Uterus (tissue), 4 donors: ENCODE measurements at regions of chr1 and their contacts with region 1.

Region 1: GRCh38 chr1:109282952-109283747 is at the start of gene PSRC1:
- DNase-seq: peak; percentile 96 to 97
- H3K4me3 ChIP-seq: peak within 1 kb of the TSS; percentile 36 to 53
- H3K27ac ChIP-seq: peak within 1 kb of the TSS; percentile 66 to 86
- H3K4me1 ChIP-seq: peaks cover 4 to 7% of the 10 kb centered on the region in 2 donors
- H3K27me3 ChIP-seq: no peaks in the 10 kb centered on the region
- CTCF ChIP-seq: peak; percentile 38 to 62 (median 58)
- POLR2A ChIP-seq: peak; percentile 65 to 78
- total RNA-seq, gene PSRC1: 3.8 to 11.4 (median 7.5) TPM

Region 2: GRCh38 chr1:108862698-108863477 is 420.3 kb before region 1 on chr1:
- intact Hi-C with region 1: no loop called
- DNase-seq: no peak
- H3K4me3 ChIP-seq: no peak overlapping the region
- H3K27ac ChIP-seq: no peak overlapping the region
- H3K4me1 ChIP-seq: no peaks in the 10 kb centered on the region
- H3K27me3 ChIP-seq: no peaks in the 10 kb centered on the region
- CTCF ChIP-seq: no peak
- POLR2A ChIP-seq: no peak

Region 3: GRCh38 chr1:109397538-109398342 is 114.6 kb after region 1 on chr1 and contains the start of gene SORT1:
- intact Hi-C with region 1: loop called (anchors 2 kb)
- DNase-seq: peak; percentile 79 to 85
- H3K4me3 ChIP-seq: peak within 1 kb of the TSS; percentile 34 to 36
- H3K27ac ChIP-seq: peak within 1 kb of the TSS; percentile 81 to 95
- H3K4me1 ChIP-seq: peaks cover 0 to 5% of the 10 kb centered on the region in 2 donors
- H3K27me3 ChIP-seq: no peaks in the 10 kb centered on the region
- CTCF ChIP-seq: peak in 1 of 4 experiments; percentile 24
- POLR2A ChIP-seq: peak; percentile 3 to 64
- total RNA-seq, gene SORT1: 20.2 to 43.4 (median 27.9) TPM

Region 4: DNA sequence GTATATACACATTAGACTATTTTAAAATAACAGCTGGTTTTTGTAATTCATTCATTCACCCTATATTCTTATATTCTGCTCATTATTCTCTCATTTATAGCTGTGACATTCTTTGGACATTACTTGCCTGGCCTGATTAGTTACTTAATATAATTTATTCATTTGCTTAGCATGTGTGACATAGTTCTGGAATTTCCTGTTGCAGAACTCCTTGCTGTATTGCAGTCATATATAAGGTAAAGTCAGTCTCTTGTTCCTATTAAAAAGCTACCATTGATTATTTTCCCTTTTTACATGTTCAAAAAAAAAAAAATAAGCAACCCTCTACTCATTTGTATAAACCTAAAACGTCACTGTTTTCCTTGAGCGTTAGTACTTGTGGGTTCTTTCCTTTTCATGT is 312.4 kb after region 1 on chr1:
- intact Hi-C with region 1: no loop called
- DNase-seq: no peak
- H3K4me3 ChIP-seq: no peak overlapping the region
- H3K27ac ChIP-seq: no peak overlapping the region
- H3K4me1 ChIP-seq: no peaks in the 10 kb centered on the region
- H3K27me3 ChIP-seq: no peaks in the 10 kb centered on the region
- CTCF ChIP-seq: no peak
- POLR2A ChIP-seq: no peak